ENCODE measurements at regions of chr18 and their contacts with region 1.

Region 1: DNA sequence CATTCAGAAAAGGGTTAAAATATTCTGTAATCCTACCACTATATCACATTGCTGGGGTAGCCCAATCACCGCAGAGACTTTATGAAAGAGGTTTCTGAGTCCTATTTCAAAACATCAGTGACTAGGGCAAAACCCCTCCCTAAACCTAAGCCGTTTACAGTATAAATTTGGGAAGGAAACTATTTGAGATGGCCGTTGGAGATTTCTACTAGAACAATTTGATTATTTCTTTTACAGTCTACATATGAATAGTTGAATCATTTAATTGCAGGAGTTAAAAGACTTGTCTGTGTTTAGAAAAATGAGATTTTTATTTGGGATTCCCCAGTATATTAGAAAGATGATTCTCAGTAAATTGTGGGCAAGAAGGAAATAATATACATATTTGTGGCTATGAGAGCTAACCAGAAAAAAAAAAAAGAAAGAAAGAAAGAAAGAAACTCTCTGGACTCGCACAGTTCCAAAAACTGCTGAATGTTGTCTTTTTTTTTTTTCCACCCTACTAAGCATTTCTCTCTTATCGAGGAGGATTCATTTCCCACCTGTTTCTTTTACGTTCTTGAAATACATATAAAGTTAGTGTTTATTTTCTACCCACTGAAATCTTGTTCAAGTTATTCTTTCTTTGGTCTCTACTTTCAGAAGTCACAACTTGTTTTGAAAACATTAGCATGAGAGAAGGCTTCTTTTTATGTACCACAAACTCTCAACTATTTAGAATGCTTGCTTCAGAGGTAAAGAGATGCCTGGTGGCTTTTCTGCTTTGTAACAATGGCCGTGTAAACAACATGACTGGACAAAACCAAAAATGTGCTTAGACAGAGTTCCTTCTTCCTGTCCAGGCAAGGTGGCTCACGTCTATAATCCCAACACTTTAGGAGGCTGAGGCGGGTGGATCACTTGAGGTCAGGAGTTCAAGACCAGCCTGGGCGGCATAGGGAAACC is 65.9 kb downstream of the BCL2 start:
- DNase-seq: no peak
- H3K4me3 ChIP-seq: no peak overlapping the region
- H3K27me3 ChIP-seq: peaks cover 7% of the 10 kb centered on the region
- CTCF ChIP-seq: no peak

Region 2: GRCh38 chr18:63267975-63268721 is 14.4 kb after region 1 on chr18:
- CTCF ChIA-PET with region 1: no interaction called
- POLR2A ChIA-PET with region 1: no interaction called
- DNase-seq: no peak
- H3K4me3 ChIP-seq: no peak overlapping the region
- H3K27me3 ChIP-seq: peaks cover 5% of the 10 kb centered on the region; the same call in 1 of the 2 replicates
- CTCF ChIP-seq: no peak

Region 3: DNA sequence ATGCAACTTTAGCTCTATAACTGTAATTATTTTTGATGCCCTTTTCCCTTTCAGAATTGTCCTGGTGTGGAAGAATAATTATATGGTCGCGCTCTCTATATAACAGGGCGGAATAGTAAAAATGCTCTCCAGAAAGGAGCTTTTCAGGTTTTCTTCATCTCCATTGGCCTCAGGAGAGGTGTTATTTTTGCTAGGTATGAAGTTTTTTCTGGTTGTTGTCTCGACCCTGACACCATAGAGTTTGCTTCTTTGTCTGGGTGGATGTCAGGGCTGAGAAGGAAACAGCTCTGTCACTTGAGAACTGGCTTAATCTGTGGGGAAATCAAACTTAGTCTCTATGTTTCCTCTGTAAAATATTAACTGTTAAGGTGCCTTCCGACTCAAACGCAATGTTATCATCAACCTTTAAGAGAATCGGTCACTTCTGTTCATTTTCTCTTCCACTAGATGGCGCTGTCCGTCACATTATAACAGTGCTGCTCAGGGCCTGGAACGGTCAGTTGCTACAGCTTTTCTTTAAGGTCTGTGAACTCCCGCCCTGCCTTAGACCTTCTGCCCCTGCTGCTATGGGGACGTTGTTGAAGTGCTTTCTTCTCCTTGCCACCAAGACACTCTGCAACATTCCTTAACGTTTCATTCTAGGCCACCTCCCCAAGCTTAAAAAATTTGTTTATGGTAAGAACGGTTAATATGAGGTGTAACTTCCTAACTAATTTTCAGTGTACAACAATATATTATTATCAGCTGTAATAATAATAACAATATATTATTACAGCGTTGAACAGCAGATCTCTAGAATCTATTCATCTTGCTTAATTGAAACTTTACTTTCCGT is 264.7 kb after region 1 on chr18:
- CTCF ChIA-PET with region 1: no interaction called
- POLR2A ChIA-PET with region 1: no interaction called
- DNase-seq: no peak
- H3K4me3 ChIP-seq: no peak overlapping the region
- H3K27me3 ChIP-seq: no peaks in the 10 kb centered on the region
- CTCF ChIP-seq: peak; percentile 54

Region 4: GRCh38 chr18:63775166-63775730 is 521.5 kb after region 1 on chr18 and contains the start of gene SERPINB7:
- CTCF ChIA-PET with region 1: no interaction called
- POLR2A ChIA-PET with region 1: interaction called, 10 read pairs
- DNase-seq: peak; percentile 71
- H3K4me3 ChIP-seq: no peak within 1 kb of the TSS
- H3K27me3 ChIP-seq: no peaks in the 10 kb centered on the region
- CTCF ChIP-seq: no peak
- polyA plus RNA-seq, gene SERPINB7: 149 and 246 TPM in 2 replicates

Measured in BJ (cell line).